BJ (cell line): ENCODE measurements at regions of chr3 and their contacts with region 1.

Region 1: DNA sequence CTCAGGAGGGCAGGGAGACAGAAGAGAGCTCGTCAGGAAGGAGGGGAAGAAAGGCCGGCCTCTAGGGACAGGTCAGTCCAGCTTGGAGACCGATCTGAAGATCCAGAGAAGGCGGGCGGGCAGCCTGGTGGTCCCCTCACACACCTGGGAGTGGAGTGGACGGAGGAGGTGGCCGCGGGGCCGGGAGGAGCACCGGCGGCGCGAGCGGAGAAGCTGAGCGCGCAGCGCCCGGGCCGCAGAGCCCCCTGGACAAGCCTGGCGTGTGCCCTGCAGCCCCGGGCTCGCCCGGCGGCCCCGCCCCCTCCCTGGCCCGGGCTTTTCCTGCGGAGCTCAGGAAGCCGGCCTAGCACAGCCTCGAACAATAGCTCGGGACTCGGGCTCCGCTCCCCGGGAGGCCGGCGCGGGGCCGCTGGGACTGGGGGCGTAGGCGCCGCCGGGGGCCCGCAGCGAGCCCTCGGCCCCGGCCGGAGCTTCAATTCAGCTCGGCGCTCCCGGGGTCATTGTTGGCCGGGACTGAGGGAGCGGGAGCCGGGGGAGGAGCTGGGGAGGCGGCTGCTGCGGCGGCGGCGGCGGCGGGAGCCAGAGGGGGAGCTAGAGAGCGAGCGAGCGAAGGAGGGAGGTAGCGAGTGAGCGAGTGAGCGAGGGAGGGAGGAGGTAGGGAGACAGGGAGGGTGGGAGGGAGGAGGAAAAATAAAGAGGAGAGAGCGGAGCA is 40.9 kb upstream of the ROPN1 start:
- DNase-seq: peak; percentile 22
- H3K4me3 ChIP-seq: peak overlapping the region; percentile 85
- H3K27me3 ChIP-seq: peaks cover 6% of the 10 kb centered on the region
- CTCF ChIP-seq: peak; percentile 83

Region 2: GRCh38 chr3:123732473-123733157 is 300.2 kb before region 1 on chr3:
- CTCF ChIA-PET with region 1: no interaction called
- POLR2A ChIA-PET with region 1: no interaction called
- DNase-seq: no peak
- H3K4me3 ChIP-seq: no peak overlapping the region
- H3K27me3 ChIP-seq: no peaks in the 10 kb centered on the region
- CTCF ChIP-seq: no peak

Region 3: DNA sequence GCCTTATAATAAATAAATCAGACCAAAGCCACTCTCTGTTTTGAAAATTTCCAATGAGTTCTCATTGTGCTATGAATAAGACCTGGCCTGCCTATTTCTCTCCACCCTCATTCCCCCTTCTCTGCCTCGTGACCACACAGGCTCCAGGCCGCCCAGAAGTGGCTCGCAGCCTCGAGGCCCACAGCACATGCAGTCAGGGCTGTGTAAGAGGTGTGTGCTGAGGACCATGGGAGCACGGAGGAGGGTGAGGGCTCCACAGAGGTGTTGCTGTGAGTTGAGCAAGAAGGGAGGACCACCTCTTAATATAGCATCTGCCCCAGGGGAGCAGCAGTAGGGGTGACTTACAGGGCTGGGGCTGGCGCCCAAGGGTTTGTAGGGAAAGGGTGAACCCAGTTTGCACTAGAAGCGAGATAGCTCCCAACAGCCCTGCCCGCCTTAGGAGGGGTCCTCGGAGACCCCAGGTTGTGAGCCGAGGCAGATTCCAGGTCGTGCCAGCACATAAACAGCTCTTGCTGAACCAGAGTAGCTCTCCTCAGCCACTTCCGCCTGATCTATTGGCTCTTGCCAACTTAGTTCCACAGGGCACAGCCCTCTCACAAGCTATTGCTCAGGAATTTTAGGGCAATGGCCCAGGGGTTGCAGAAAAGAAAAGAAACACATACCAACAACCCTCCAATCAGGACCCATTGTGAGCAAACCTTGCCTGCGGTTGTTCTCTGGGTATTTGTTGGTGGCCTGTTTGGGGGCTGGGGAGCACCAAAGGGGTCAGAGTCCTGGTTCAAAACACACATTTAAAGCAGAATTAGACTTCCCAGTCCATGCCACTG is 266.4 kb before region 1 on chr3:
- CTCF ChIA-PET with region 1: no interaction called
- POLR2A ChIA-PET with region 1: no interaction called
- DNase-seq: no peak
- H3K4me3 ChIP-seq: no peak overlapping the region
- H3K27me3 ChIP-seq: no peaks in the 10 kb centered on the region
- CTCF ChIP-seq: no peak

Region 4: GRCh38 chr3:123941121-123941520 is 91.7 kb before region 1 on chr3:
- CTCF ChIA-PET with region 1: no interaction called
- POLR2A ChIA-PET with region 1: no interaction called
- DNase-seq: no peak
- H3K4me3 ChIP-seq: no peak overlapping the region
- H3K27me3 ChIP-seq: no peaks in the 10 kb centered on the region
- CTCF ChIP-seq: peak; percentile 29

Region 5: GRCh38 chr3:124014366-124014942 is 18.4 kb before region 1 on chr3:
- CTCF ChIA-PET with region 1: interaction called, 28 read pairs
- POLR2A ChIA-PET with region 1: no interaction called
- DNase-seq: no peak
- H3K4me3 ChIP-seq: no peak overlapping the region
- H3K27me3 ChIP-seq: no peaks in the 10 kb centered on the region; the same call in 1 of the 2 replicates
- CTCF ChIP-seq: no peak

Region 6: DNA sequence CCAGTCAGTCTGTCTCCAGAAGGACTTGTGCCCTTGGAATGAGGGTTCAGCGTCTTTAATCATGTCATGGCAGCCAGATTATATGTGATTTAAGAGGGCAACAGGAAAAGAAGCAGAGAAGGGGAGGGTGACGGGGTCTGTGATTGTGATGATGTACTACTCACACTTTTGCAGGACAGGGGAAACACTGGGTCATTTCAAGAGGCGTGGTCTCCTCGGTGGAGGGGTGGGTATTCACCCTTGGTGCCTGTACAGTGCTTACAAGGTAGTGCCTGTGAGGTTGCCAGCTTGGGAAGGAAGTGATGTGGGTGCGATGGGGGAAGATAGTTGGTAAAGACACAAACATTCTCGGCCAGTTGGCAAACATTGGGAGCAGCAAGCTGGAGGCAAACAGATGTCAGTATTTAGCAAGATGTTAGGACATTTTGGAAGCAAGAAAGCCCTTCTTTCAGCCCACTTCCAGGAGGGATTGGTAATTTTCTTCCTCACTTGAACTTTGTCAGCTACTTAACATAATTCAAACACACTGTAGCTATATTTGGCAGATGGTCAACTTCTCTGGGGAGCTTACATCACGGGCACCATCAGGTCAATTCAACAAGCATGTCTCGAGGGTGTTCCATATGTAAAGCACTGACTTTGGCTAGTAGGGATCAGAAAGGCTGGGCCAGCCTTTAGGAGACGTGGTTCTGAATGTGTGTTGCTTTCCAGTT is 30.5 kb after region 1 on chr3:
- CTCF ChIA-PET with region 1: interaction called, 17 read pairs
- POLR2A ChIA-PET with region 1: interaction called, 5 read pairs
- DNase-seq: no peak
- H3K4me3 ChIP-seq: no peak overlapping the region
- H3K27me3 ChIP-seq: no peaks in the 10 kb centered on the region
- CTCF ChIP-seq: no peak

Region 7: GRCh38 chr3:124078953-124079911 is 46.4 kb after region 1 on chr3:
- CTCF ChIA-PET with region 1: interaction called, 10 read pairs
- POLR2A ChIA-PET with region 1: no interaction called
- DNase-seq: no peak
- H3K4me3 ChIP-seq: no peak overlapping the region
- H3K27me3 ChIP-seq: no peaks in the 10 kb centered on the region; the same call in 1 of the 2 replicates
- CTCF ChIP-seq: peak; percentile 74

Region 8: DNA sequence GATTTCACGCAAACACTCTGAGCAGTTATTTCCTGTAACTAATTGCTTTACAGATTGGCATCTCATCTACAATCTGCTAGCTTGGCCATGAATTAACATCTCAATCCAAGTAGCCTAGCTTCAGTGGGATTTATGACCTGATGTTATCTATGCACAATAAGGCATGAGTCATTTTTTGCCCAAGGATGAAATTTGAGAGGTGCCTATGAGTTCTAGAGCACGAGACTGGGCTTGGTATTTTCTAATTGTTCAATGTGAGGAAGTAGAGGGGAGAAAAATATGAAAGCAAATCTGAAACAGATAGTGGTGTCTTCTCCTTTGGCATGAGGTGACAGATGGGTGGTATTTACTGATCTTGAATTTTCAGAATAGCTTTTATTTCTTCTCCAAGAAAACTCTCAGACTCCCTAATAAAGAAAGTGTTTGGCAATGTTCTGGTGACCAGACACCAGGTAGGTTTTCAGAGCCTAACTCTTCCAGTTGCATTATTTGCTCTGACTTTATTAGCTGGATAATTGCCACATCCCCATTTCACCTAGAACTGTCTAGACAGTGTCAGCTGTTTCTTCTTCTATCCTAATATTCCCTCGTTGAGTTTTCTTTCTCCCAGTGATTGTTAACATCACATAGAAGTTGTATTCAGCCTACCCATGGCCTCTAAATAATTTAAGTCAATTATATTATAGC is 396.5 kb after region 1 on chr3:
- CTCF ChIA-PET with region 1: no interaction called
- POLR2A ChIA-PET with region 1: interaction called, 11 read pairs
- DNase-seq: peak; percentile 55
- H3K4me3 ChIP-seq: no peak overlapping the region
- H3K27me3 ChIP-seq: peaks cover 3% of the 10 kb centered on the region; the same call in 1 of the 2 replicates
- CTCF ChIP-seq: no peak